Activated CD4-positive, alpha-beta memory T cell treated with anti-CD3 and anti-CD28 coated beads for 36 hours (primary cell): ENCODE measurements at regions of chr5 and their contacts with region 1.

Region 1: GRCh38 chr5:59188419-59189225 is 605.7 kb downstream of the RAB3C start:
- DNase-seq: peak; percentile 74
- H3K4me3 Mint-ChIP-seq: no peak overlapping the region
- H3K27ac Mint-ChIP-seq: no peak overlapping the region
- H3K4me1 Mint-ChIP-seq: peaks cover 3% of the 10 kb centered on the region
- H3K27me3 Mint-ChIP-seq: peaks cover 22% of the 10 kb centered on the region

Region 2: GRCh38 chr5:59174248-59174844 is 14.3 kb before region 1 on chr5:
- CTCF ChIA-PET with region 1: interaction called, 17 read pairs
- POLR2A ChIA-PET with region 1: no interaction called
- intact Hi-C with region 1: no loop called
- DNase-seq: peak; percentile 33
- H3K4me3 Mint-ChIP-seq: no peak overlapping the region
- H3K27ac Mint-ChIP-seq: no peak overlapping the region
- H3K4me1 Mint-ChIP-seq: peaks cover 24% of the 10 kb centered on the region
- H3K27me3 Mint-ChIP-seq: no peaks in the 10 kb centered on the region

Region 3: GRCh38 chr5:59218424-59219045 is 29.9 kb after region 1 on chr5:
- CTCF ChIA-PET with region 1: interaction called, 11 read pairs
- POLR2A ChIA-PET with region 1: no interaction called
- intact Hi-C with region 1: loop called (anchors 1 kb)
- DNase-seq: no peak
- H3K4me3 Mint-ChIP-seq: no peak overlapping the region
- H3K27ac Mint-ChIP-seq: no peak overlapping the region
- H3K4me1 Mint-ChIP-seq: no peaks in the 10 kb centered on the region
- H3K27me3 Mint-ChIP-seq: peaks cover 26% of the 10 kb centered on the region

Region 4: DNA sequence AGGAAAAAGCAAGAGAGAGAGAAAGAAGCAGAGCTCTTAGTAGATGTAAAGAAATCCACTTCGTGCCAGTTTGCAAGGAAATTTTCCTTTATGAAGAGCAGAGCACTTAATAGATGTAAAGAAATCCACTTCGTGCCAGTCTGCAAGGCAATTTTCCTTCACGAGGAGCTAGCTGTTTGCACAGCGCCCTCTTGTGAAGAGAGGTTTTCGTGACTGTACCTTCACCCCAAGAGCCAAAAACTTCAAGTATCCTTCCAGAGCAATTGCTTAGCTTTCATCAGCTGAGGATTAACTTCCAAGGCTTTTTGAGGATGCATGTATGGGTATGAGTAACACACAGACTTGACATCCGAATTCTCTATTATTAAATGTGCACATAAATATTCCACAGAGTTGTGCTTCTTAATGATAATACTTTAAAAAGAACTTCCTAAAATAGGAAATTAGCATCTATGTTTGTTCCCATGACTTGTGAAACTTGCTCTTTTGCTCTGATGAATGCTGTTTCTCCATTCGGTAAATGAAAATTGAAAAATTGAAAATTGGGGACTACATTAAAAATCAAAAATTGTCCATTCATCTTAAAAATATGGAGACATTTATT is 179.3 kb after region 1 on chr5:
- CTCF ChIA-PET with region 1: interaction called, 107 read pairs
- POLR2A ChIA-PET with region 1: no interaction called
- intact Hi-C with region 1: loop called (anchors 1 kb)
- DNase-seq: peak; percentile 58
- H3K4me3 Mint-ChIP-seq: no peak overlapping the region
- H3K27ac Mint-ChIP-seq: no peak overlapping the region
- H3K4me1 Mint-ChIP-seq: peaks cover 11% of the 10 kb centered on the region
- H3K27me3 Mint-ChIP-seq: peaks cover 14% of the 10 kb centered on the region

Region 5: GRCh38 chr5:59390074-59390659 is 201.5 kb after region 1 on chr5:
- CTCF ChIA-PET with region 1: interaction called, 26 read pairs
- POLR2A ChIA-PET with region 1: no interaction called
- intact Hi-C with region 1: no loop called
- DNase-seq: no peak
- H3K4me3 Mint-ChIP-seq: no peak overlapping the region
- H3K27ac Mint-ChIP-seq: no peak overlapping the region
- H3K4me1 Mint-ChIP-seq: no peaks in the 10 kb centered on the region
- H3K27me3 Mint-ChIP-seq: peaks cover 6% of the 10 kb centered on the region

Region 6: DNA sequence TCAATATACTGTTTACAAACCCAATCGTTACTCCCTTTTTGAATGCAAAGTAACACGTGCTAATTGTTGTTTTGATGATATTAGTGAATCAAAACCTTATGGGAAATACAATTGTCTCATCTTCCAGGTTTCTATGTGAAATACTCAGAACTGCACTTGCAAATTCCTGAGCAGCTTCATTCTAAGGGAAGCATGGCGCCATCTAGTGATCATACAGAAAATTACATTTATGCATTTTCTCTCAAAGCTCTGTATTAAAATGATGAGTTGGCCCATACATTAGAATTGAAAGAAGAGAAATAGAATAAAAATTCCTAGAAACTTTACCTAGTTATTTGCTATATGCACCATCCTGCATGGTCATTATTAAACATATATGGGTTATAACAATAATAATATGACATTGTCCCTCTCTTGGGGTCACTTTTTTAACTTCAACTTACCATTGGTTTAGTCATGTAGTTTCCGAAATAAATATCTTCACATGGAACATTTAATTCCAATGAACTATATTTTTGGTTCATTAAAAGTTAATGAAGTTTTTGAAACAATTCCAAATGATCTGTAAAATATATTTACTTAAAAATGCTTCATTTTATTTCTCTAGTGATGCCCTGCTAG is 484.9 kb after region 1 on chr5:
- CTCF ChIA-PET with region 1: interaction called, 7 read pairs
- POLR2A ChIA-PET with region 1: no interaction called
- intact Hi-C with region 1: loop called (anchors 1 kb)
- DNase-seq: no peak
- H3K4me3 Mint-ChIP-seq: no peak overlapping the region
- H3K27ac Mint-ChIP-seq: no peak overlapping the region
- H3K4me1 Mint-ChIP-seq: no peaks in the 10 kb centered on the region
- H3K27me3 Mint-ChIP-seq: no peaks in the 10 kb centered on the region